Caco-2 (cell line): ENCODE measurements at regions of chr6 and their contacts with region 1.

Region 1: GRCh38 chr6:37691904-37692806 is 5.5 kb downstream of the MDGA1 start:
- DNase-seq: peak; percentile 77 to 87
- H3K4me3 ChIP-seq: no peak overlapping the region
- H3K4me3 Mint-ChIP-seq: no peak overlapping the region
- H3K27ac Mint-ChIP-seq: no peak overlapping the region
- H3K4me1 ChIP-seq: peaks cover 16% of the 10 kb centered on the region
- H3K4me1 Mint-ChIP-seq: no peaks in the 10 kb centered on the region
- H3K27me3 ChIP-seq: peaks cover 8% of the 10 kb centered on the region
- H3K27me3 Mint-ChIP-seq: peaks cover 22% of the 10 kb centered on the region
- CTCF ChIP-seq: peak; percentile 95 to 98

Region 2: DNA sequence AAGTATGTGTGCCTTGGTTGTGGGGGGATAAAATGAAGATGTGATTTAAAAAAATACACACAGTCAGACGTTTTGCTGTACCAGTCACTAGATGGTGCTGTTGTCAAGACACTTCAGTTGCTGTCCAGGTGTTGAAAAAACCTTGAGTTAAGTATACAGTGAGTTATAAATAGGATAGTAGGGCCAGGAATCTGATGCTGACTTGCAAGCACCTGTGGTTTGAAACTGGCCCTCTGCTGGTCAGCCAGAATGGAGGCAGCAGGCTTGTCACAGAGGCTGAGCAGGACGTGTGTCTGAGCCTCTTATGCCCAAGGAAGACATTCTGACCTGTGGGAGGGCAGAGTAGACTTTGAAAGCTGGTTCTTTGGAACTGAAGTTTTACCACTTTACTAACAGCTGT is 310.6 kb before region 1 on chr6:
- CTCF ChIA-PET with region 1: interaction called, 3 read pairs
- POLR2A ChIA-PET with region 1: no interaction called
- intact Hi-C with region 1: loop called (anchors 1 kb)
- DNase-seq: peak; percentile 82 to 84
- H3K4me3 ChIP-seq: no peak overlapping the region
- H3K4me3 Mint-ChIP-seq: no peak overlapping the region
- H3K27ac Mint-ChIP-seq: peak overlapping the region; percentile 31
- H3K4me1 ChIP-seq: peaks cover 25% of the 10 kb centered on the region
- H3K4me1 Mint-ChIP-seq: peaks cover 16% of the 10 kb centered on the region
- H3K27me3 ChIP-seq: no peaks in the 10 kb centered on the region
- H3K27me3 Mint-ChIP-seq: no peaks in the 10 kb centered on the region
- CTCF ChIP-seq: peak; percentile 67 to 85

Region 3: DNA sequence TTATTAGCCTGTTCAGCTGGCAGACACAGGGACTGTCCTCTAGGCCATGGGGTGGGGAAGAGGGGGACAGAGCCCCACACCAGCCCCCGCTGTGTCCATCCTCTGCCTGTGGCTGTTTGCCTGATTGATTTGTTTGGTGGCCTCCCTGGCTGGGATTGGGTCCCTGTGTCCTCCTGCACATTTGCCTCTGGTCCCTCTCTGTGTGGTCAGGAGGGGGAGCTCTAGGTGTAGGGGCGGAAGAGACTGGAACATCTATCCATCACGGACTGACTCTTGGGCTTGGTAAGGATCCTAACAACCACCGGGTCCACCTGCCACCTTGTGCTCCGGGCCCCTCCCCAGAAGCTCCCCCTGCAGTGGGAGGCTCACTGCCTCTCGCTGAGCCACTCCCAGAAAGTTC is 154.0 kb before region 1 on chr6:
- CTCF ChIA-PET with region 1: interaction called, 15 read pairs
- POLR2A ChIA-PET with region 1: no interaction called
- intact Hi-C with region 1: loop called (anchors 1 kb)
- DNase-seq: peak; percentile 56 to 57
- H3K4me3 ChIP-seq: no peak overlapping the region
- H3K4me3 Mint-ChIP-seq: no peak overlapping the region
- H3K27ac Mint-ChIP-seq: no peak overlapping the region
- H3K4me1 ChIP-seq: no peaks in the 10 kb centered on the region
- H3K4me1 Mint-ChIP-seq: no peaks in the 10 kb centered on the region
- H3K27me3 ChIP-seq: no peaks in the 10 kb centered on the region
- H3K27me3 Mint-ChIP-seq: no peaks in the 10 kb centered on the region
- CTCF ChIP-seq: peak in 1 of 2 experiments; percentile 55

Region 4: DNA sequence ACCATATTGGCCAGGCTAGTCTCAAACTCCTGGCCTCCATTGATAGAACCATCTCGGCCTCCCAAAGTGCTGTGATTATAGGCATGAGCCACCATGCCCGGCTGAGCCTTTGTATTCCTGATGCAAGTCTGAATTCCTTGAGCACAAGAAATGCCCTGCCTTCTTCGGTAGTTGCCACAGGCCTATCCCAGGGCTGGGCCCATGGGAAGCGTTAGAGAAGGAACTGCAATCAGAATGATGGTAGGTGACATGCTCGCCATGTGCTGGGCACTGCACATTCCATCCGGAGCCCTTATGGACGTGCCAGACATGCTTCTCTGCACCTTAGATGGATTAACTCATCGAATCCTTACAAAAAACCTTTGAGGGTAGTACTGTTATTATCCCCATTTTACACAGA is 110.6 kb before region 1 on chr6:
- CTCF ChIA-PET with region 1: no interaction called
- POLR2A ChIA-PET with region 1: no interaction called
- intact Hi-C with region 1: loop called (anchors 1 kb)
- DNase-seq: no peak
- H3K4me3 ChIP-seq: no peak overlapping the region
- H3K4me3 Mint-ChIP-seq: no peak overlapping the region
- H3K27ac Mint-ChIP-seq: no peak overlapping the region
- H3K4me1 ChIP-seq: peaks cover 6% of the 10 kb centered on the region; the same call in 1 of the 2 replicates
- H3K4me1 Mint-ChIP-seq: peaks cover 9% of the 10 kb centered on the region
- H3K27me3 ChIP-seq: no peaks in the 10 kb centered on the region
- H3K27me3 Mint-ChIP-seq: no peaks in the 10 kb centered on the region
- CTCF ChIP-seq: no peak